Mammary epithelial cell (primary cell): ENCODE measurements at regions of chr2 and their contacts with region 1.

Region 1: GRCh38 chr2:150466741-150467620 is 20.5 kb downstream of the RND3 start:
- DNase-seq: peak; percentile 49
- H3K4me3 ChIP-seq: no peak overlapping the region
- H3K27ac ChIP-seq: peak overlapping the region; percentile 40
- H3K4me1 ChIP-seq: peaks cover 12% of the 10 kb centered on the region
- H3K27me3 ChIP-seq: no peaks in the 10 kb centered on the region
- CTCF ChIP-seq: no peak

Region 2: GRCh38 chr2:149799013-149799705 is 667.8 kb before region 1 on chr2:
- CTCF ChIA-PET with region 1: interaction called, 3 read pairs
- dilution Hi-C with region 1: no loop called
- in situ Hi-C with region 1: loop called in 1 of 2 experiments (anchors 25 kb)
- intact Hi-C with region 1: loop called (anchors 1 kb)
- DNase-seq: peak; percentile 16
- H3K4me3 ChIP-seq: no peak overlapping the region
- H3K27ac ChIP-seq: no peak overlapping the region
- H3K4me1 ChIP-seq: no peaks in the 10 kb centered on the region
- H3K27me3 ChIP-seq: no peaks in the 10 kb centered on the region
- CTCF ChIP-seq: peak; percentile 33 to 60

Region 3: DNA sequence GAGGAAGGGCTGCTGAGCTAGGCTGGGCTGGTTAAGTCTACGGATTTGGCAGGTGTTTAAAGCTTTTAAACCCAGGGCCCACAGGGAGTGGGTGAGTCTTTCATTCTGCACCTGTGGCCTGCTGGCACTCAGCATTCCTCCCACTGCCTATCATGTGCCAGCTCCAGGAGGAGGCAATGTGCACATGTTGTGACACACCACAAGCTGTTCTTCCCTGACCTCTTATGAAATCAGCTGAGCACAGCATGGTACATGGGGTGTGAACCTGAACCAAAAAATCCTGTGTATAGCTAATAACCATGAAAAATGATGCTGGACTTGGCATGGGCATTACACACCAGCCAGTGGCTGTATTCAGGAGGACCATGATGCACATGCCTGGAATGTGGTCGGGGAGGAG is 581.5 kb before region 1 on chr2:
- CTCF ChIA-PET with region 1: interaction called, 12 read pairs
- dilution Hi-C with region 1: no loop called
- in situ Hi-C with region 1: no loop called
- intact Hi-C with region 1: no loop called
- DNase-seq: peak; percentile 65
- H3K4me3 ChIP-seq: no peak overlapping the region
- H3K27ac ChIP-seq: no peak overlapping the region
- H3K4me1 ChIP-seq: peaks cover 16% of the 10 kb centered on the region
- H3K27me3 ChIP-seq: peaks cover 1% of the 10 kb centered on the region
- CTCF ChIP-seq: no peak

Region 4: GRCh38 chr2:149924028-149924427 is 543.0 kb before region 1 on chr2:
- CTCF ChIA-PET with region 1: no interaction called
- dilution Hi-C with region 1: no loop called
- in situ Hi-C with region 1: no loop called
- intact Hi-C with region 1: loop called (anchors 10 kb)
- DNase-seq: peak; percentile 53
- H3K4me3 ChIP-seq: no peak overlapping the region
- H3K27ac ChIP-seq: no peak overlapping the region
- H3K4me1 ChIP-seq: peaks cover 6% of the 10 kb centered on the region
- H3K27me3 ChIP-seq: no peaks in the 10 kb centered on the region
- CTCF ChIP-seq: no peak

Region 5: GRCh38 chr2:150063432-150063889 is 403.5 kb before region 1 on chr2:
- CTCF ChIA-PET with region 1: no interaction called
- dilution Hi-C with region 1: no loop called
- in situ Hi-C with region 1: no loop called
- intact Hi-C with region 1: loop called (anchors 5 kb)
- DNase-seq: peak; percentile 90
- H3K4me3 ChIP-seq: no peak overlapping the region
- H3K27ac ChIP-seq: peak overlapping the region; percentile 23
- H3K4me1 ChIP-seq: peaks cover 23% of the 10 kb centered on the region
- H3K27me3 ChIP-seq: no peaks in the 10 kb centered on the region
- CTCF ChIP-seq: no peak

Region 6: DNA sequence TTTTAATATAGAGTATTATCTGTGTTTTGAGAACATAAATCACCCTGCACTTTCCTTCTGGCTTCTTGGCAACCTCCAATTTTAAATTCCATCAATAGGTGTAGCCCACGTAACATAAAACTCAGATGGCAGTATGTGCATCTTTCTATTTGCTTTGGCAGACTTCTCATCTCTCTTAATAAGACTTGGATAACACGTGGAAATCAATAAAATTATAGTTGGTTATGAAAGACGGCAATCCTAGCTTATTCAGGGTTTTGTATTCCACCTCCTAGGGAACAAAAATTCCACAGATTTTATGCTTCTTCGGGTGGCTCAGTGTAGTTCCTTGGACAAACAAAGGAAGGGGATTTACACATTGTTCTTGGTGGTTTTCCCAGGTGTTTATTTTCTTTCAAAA is 278.8 kb before region 1 on chr2:
- CTCF ChIA-PET with region 1: no interaction called
- dilution Hi-C with region 1: no loop called
- in situ Hi-C with region 1: no loop called
- intact Hi-C with region 1: loop called (anchors 2 kb)
- DNase-seq: peak; percentile 37
- H3K4me3 ChIP-seq: no peak overlapping the region
- H3K27ac ChIP-seq: peak overlapping the region; percentile 14
- H3K4me1 ChIP-seq: peaks cover 21% of the 10 kb centered on the region
- H3K27me3 ChIP-seq: no peaks in the 10 kb centered on the region
- CTCF ChIP-seq: peak in 1 of 2 donors; percentile 35